Motor neuron (in vitro differentiated cells): ENCODE measurements at regions of chr17 and their contacts with region 1.

Region 1: GRCh38 chr17:44636562-44636961 is 19.7 kb upstream of the MEIOC start:
- ATAC-seq: peak in 7 of 8 experiments; percentile 45 to 75 (median 67)
- H3K4me3 ChIP-seq: no peak overlapping the region
- H3K27ac ChIP-seq: no peak overlapping the region
- H3K4me1 ChIP-seq: no peaks in the 10 kb centered on the region

Region 2: DNA sequence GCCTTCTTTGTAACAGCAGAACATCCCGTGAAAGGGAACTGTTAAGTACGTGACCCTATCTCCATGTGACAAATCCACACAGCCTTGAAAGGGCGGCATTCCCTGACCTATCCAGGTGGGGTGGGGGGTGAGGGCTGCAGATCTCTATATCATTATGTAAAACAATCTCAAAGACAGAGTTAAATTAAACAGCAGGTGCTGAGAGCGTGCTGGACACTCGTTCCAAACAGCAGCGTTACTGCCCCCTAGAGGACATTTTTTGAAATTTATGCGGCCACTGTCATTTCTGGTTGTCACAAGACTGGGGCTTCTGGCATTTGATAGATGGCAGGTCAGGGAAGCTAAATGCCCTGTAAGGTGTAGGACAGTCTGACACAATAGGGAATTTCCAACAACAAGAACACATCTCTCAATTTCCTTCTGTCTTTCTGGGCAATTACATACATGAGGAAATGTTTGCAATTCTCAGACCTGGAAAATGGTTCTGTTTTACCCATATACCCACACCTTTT is 305.3 kb before region 1 on chr17:
- in situ Hi-C with region 1: no loop called
- ATAC-seq: peak; percentile 25 to 60 (median 53)
- H3K4me3 ChIP-seq: no peak overlapping the region
- H3K27ac ChIP-seq: no peak overlapping the region
- H3K4me1 ChIP-seq: peaks cover 6% of the 10 kb centered on the region in 2 donors

Region 3: DNA sequence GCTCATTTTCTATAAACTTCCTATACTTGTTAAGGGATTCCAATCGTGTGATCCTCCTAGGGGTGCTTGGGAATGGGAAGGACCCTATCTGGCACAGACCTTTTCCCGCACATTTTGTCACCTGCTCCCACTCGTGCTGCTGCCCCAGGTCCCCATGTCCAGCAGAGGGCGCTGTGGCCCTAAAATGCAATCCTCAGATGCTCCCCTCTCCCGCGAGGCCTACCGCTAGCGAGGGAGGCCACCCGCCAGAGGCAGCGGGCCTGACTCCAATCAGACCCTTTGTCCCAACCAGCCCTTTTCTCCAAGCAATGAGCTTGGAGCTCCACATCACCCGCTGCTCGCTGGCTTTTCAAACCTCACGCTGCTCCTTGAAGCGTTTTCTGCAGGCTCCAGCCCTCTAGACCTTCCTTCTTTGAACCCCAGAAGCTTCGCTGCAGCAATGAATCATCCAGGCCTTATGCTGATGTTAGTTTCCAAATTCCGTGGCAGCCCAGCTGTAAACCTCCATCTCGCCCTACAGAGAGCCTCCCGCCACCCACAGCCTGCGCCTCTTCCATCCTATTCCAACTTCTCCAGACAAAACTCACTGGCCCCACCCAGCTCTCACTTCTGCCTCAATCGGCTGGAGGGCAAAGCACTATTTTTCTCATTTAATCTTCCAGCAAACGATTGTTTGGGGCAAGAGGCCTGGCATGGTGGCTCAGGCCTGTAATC is 102.9 kb before region 1 on chr17:
- in situ Hi-C with region 1: loop called in 7 of 9 experiments (anchors 10 to 25 kb)
- ATAC-seq: peak; percentile 86 to 98 (median 93)
- H3K4me3 ChIP-seq: no peak overlapping the region
- H3K27ac ChIP-seq: peak overlapping the region in 1 of 2 donors; percentile 53
- H3K4me1 ChIP-seq: peaks cover 9 to 14% of the 10 kb centered on the region in 2 donors

Region 4: DNA sequence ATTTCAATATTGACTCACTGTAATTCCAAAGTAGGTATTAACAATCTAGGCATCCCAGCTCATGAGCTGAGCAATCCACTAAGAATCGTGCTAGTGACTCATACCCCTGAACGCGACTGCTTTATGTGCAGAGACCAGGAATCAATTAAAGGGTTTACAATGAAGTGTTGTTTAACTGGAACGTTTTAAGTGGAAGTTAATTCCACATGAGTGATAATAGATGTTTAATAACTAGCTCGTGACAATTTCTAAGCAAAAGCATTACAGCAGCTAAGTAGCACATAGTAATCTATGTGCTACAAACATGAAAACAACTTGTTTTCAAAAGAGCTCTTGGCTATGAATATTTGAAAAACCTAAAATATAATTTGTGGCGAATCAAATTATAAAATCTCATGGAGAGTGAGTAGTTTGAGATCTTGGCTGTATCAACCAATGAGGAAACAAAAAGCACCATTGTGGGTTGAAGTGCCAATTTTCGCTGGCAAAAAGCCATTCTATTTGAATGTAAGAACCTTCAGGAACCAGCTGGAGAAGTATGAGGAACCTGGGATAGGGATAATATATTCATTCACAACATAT is 184.2 kb after region 1 on chr17:
- in situ Hi-C with region 1: no loop called
- ATAC-seq: peak; percentile 72 to 100 (median 99)
- H3K4me3 ChIP-seq: no peak overlapping the region
- H3K27ac ChIP-seq: no peak overlapping the region
- H3K4me1 ChIP-seq: no peaks in the 10 kb centered on the region

Region 5: GRCh38 chr17:45021607-45022287 is 385.2 kb after region 1 on chr17:
- in situ Hi-C with region 1: no loop called
- ATAC-seq: peak; percentile 65 to 81 (median 71)
- H3K4me3 ChIP-seq: peak overlapping the region in 3 of 5 donors; percentile 17 to 20 (median 19)
- H3K27ac ChIP-seq: no peak overlapping the region
- H3K4me1 ChIP-seq: peaks cover 35% of the 10 kb centered on the region in 2 donors